Activated CD4-positive, alpha-beta memory T cell treated with anti-CD3 and anti-CD28 coated beads, Interleukin-2, amount 10 ng/mL, durations not matched to agents 7 days and 5 days (primary cell): ENCODE measurements at regions of chr7 and their contacts with region 1.

Region 1: GRCh38 chr7:1175967-1176851 is 16.2 kb upstream of the ZFAND2A start:
- DNase-seq: peak; percentile 86
- H3K4me3 Mint-ChIP-seq: peak overlapping the region; percentile 61
- H3K27ac Mint-ChIP-seq: peak overlapping the region; percentile 78
- H3K4me1 Mint-ChIP-seq: peaks cover 20% of the 10 kb centered on the region
- H3K27me3 Mint-ChIP-seq: peaks cover 11% of the 10 kb centered on the region

Region 2: GRCh38 chr7:1065263-1066260 is 110.6 kb before region 1 on chr7:
- CTCF ChIA-PET with region 1: interaction called, 18 read pairs
- POLR2A ChIA-PET with region 1: no interaction called
- DNase-seq: peak; percentile 89
- H3K4me3 Mint-ChIP-seq: no peak overlapping the region
- H3K27ac Mint-ChIP-seq: no peak overlapping the region
- H3K4me1 Mint-ChIP-seq: peaks cover 6% of the 10 kb centered on the region
- H3K27me3 Mint-ChIP-seq: peaks cover 1% of the 10 kb centered on the region

Region 3: DNA sequence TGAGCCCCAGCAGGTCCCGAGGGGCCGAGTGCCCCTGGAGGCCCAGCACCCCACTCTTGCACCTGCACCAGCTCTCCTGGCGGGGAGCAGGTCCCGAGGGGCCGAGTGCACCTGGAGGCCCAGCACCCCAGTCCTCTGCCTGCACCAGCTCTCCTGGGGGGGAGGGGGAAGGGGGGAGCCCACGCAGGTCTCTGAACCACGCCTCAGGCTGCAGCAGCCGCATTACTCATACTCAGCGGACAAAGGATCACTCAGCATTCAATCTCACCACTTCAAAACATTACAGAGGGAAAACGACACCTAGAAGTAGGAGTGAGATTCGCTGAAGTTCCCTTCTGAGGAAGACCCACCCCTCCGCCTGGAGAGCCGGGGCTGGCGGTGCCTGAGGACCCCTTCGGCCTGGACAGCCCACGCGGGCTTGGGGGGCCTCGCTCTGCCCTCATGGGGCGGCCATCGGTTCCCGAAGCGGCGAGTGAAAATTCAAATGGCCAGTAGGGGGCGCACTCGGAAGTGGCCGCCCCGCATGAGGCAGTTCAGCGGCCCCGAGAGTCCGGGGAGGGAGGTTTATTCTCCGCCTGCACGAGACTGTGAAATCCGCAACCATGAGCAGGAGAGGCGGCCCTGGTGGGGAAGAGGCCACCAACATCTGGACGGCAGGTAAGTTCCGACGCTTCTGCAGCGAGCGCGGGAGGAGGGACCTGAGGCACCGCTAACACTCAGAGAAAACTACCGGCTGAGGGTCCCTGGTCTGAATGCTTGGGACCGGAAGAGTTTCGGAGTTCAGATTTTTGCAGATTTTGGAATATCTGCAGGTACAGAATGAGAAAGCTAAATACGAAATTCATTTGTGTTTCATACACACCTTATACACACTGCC is 89.4 kb before region 1 on chr7:
- CTCF ChIA-PET with region 1: interaction called, 36 read pairs
- POLR2A ChIA-PET with region 1: no interaction called
- DNase-seq: peak; percentile 78
- H3K4me3 Mint-ChIP-seq: peak overlapping the region; percentile 52
- H3K27ac Mint-ChIP-seq: no peak overlapping the region
- H3K4me1 Mint-ChIP-seq: peaks cover 8% of the 10 kb centered on the region
- H3K27me3 Mint-ChIP-seq: peaks cover 2% of the 10 kb centered on the region

Region 4: DNA sequence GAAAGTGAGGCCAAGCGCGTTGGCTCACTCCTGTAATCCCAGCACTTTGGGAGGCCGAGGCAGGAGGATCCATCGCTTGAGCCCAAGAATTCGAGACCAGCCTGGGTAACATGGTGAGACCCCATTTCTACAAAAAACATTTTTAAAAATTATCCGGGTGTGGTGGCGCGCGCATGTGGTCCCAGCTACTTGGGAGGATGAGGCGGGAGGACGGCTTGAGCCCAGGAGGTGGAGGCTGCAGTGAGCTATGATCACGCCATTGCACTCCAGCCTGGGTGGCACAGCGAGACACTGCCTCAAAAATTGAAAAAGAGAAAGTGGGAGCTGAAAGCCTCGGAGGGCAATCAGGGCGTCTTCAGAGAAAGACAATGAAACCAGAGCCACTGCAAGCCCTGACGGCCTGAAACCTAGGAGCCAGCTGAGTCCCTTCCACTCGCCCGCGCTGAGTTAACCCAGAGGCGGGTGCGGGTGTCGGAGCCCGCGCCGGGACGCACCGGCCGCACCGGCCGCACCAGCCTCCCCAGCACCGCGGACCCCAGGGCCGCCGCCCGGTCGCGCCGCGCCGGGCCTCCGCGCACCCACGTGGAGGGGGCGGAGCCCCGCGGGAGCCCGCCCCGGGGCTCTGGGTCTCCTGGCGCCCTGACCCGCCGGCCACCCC is 38.6 kb before region 1 on chr7:
- CTCF ChIA-PET with region 1: interaction called, 24 read pairs
- POLR2A ChIA-PET with region 1: interaction called, 4 read pairs
- DNase-seq: no peak
- H3K4me3 Mint-ChIP-seq: peak overlapping the region; percentile 85
- H3K27ac Mint-ChIP-seq: peak overlapping the region; percentile 65
- H3K4me1 Mint-ChIP-seq: peaks cover 22% of the 10 kb centered on the region
- H3K27me3 Mint-ChIP-seq: no peaks in the 10 kb centered on the region

Region 5: GRCh38 chr7:1159891-1160668 is 16.1 kb before region 1 on chr7 and contains the start of gene ZFAND2A:
- CTCF ChIA-PET with region 1: interaction called, 37 read pairs
- POLR2A ChIA-PET with region 1: interaction called, 27 read pairs
- DNase-seq: peak; percentile 99
- H3K4me3 Mint-ChIP-seq: peak within 1 kb of the TSS; percentile 84
- H3K27ac Mint-ChIP-seq: peak within 1 kb of the TSS; percentile 85
- H3K4me1 Mint-ChIP-seq: peaks cover 37% of the 10 kb centered on the region
- H3K27me3 Mint-ChIP-seq: no peaks in the 10 kb centered on the region
- total RNA-seq, gene ZFAND2A: 29.4 to 34.6 TPM

Region 6: GRCh38 chr7:1187127-1187526 is 10.9 kb after region 1 on chr7:
- CTCF ChIA-PET with region 1: interaction called, 55 read pairs
- POLR2A ChIA-PET with region 1: interaction called, 10 read pairs
- DNase-seq: no peak
- H3K4me3 Mint-ChIP-seq: no peak overlapping the region
- H3K27ac Mint-ChIP-seq: no peak overlapping the region
- H3K4me1 Mint-ChIP-seq: peaks cover 21% of the 10 kb centered on the region
- H3K27me3 Mint-ChIP-seq: peaks cover 14% of the 10 kb centered on the region

Region 7: GRCh38 chr7:1193593-1194424 is 17.6 kb after region 1 on chr7:
- CTCF ChIA-PET with region 1: interaction called, 55 read pairs
- POLR2A ChIA-PET with region 1: interaction called, 10 read pairs
- DNase-seq: peak; percentile 70
- H3K4me3 Mint-ChIP-seq: no peak overlapping the region
- H3K27ac Mint-ChIP-seq: peak overlapping the region; percentile 38
- H3K4me1 Mint-ChIP-seq: peaks cover 30% of the 10 kb centered on the region
- H3K27me3 Mint-ChIP-seq: peaks cover 11% of the 10 kb centered on the region